ENCODE measurements at regions of chr5 and their contacts with region 1.

Region 1: GRCh38 chr5:96692441-96692840 is 30.3 kb downstream of the CAST start:
- DNase-seq: no peak
- H3K4me3 ChIP-seq: no peak overlapping the region
- H3K27ac ChIP-seq: no peak overlapping the region
- H3K4me1 ChIP-seq: peaks cover 25% of the 10 kb centered on the region
- H3K27me3 ChIP-seq: no peaks in the 10 kb centered on the region
- CTCF ChIP-seq: no peak

Region 2: GRCh38 chr5:96492654-96493053 is 199.8 kb before region 1 on chr5:
- intact Hi-C with region 1: no loop called
- DNase-seq: no peak
- H3K4me3 ChIP-seq: no peak overlapping the region
- H3K27ac ChIP-seq: no peak overlapping the region
- H3K4me1 ChIP-seq: no peaks in the 10 kb centered on the region
- H3K27me3 ChIP-seq: no peaks in the 10 kb centered on the region
- CTCF ChIP-seq: no peak

Region 3: GRCh38 chr5:96614110-96614691 is 78.2 kb before region 1 on chr5:
- intact Hi-C with region 1: loop called (anchors 10 kb)
- DNase-seq: no peak
- H3K4me3 ChIP-seq: peak overlapping the region; percentile 39
- H3K27ac ChIP-seq: peak overlapping the region; percentile 78
- H3K4me1 ChIP-seq: peaks cover 23% of the 10 kb centered on the region
- H3K27me3 ChIP-seq: no peaks in the 10 kb centered on the region
- CTCF ChIP-seq: peak; percentile 69